IMR-90 (cell line): ENCODE measurements at regions of chr20 and their contacts with region 1.

Region 1: GRCh38 chr20:36613974-36614373 is 8.4 kb downstream of the RAB5IF start:
- DNase-seq: no peak
- ATAC-seq: no peak
- H3K4me3 ChIP-seq: no peak overlapping the region
- H3K27ac ChIP-seq: no peak overlapping the region
- H3K4me1 ChIP-seq: no peaks in the 10 kb centered on the region
- H3K27me3 ChIP-seq: no peaks in the 10 kb centered on the region
- CTCF ChIP-seq: no peak
- POLR2A ChIP-seq: no peak
- RAD21 ChIP-seq: no peak

Region 2: GRCh38 chr20:36574366-36575135 is 39.4 kb before region 1 on chr20:
- CTCF ChIA-PET with region 1: no interaction called
- POLR2A ChIA-PET with region 1: no interaction called
- dilution Hi-C with region 1: no loop called
- in situ Hi-C with region 1: no loop called
- intact Hi-C with region 1: no loop called
- DNase-seq: peak; percentile 38
- ATAC-seq: peak; percentile 24
- H3K4me3 ChIP-seq: peak overlapping the region; percentile 60
- H3K27ac ChIP-seq: peak overlapping the region; percentile 81
- H3K4me1 ChIP-seq: peaks cover 13% of the 10 kb centered on the region
- H3K27me3 ChIP-seq: no peaks in the 10 kb centered on the region
- CTCF ChIP-seq: no peak
- POLR2A ChIP-seq: 0 out of 2 replicates have a peak, but pooled peaks have one; percentile 2
- RAD21 ChIP-seq: no peak

Region 3: GRCh38 chr20:36754656-36755222 is 140.8 kb after region 1 on chr20:
- CTCF ChIA-PET with region 1: interaction called, 3 read pairs
- POLR2A ChIA-PET with region 1: no interaction called
- dilution Hi-C with region 1: no loop called
- in situ Hi-C with region 1: loop called (anchors 10 kb)
- intact Hi-C with region 1: loop called (anchors 1 kb)
- DNase-seq: peak; percentile 88
- ATAC-seq: peak; percentile 98
- H3K4me3 ChIP-seq: no peak overlapping the region
- H3K27ac ChIP-seq: peak overlapping the region; percentile 4; the same call in 1 of the 2 replicates
- H3K4me1 ChIP-seq: no peaks in the 10 kb centered on the region
- H3K27me3 ChIP-seq: no peaks in the 10 kb centered on the region
- CTCF ChIP-seq: peak; percentile 81
- POLR2A ChIP-seq: no peak
- RAD21 ChIP-seq: peak; percentile 76